B cell (primary cell): ENCODE measurements at regions of chr19 and their contacts with region 1.

Region 1: GRCh38 chr19:8269724-8270123 is 38.4 kb downstream of the CD320 start:
- DNase-seq: peak; percentile 22
- ATAC-seq: no peak
- H3K4me3 ChIP-seq: peak overlapping the region in 4 of 5 experiments; percentile 51 to 64 (median 56)
- H3K4me3 Mint-ChIP-seq: peak overlapping the region; percentile 86
- H3K27ac ChIP-seq: peak overlapping the region; percentile 88
- H3K27ac Mint-ChIP-seq: peak overlapping the region; percentile 96
- H3K4me1 ChIP-seq: peaks cover 14 to 22% of the 10 kb centered on the region in 2 donors
- H3K4me1 Mint-ChIP-seq: peaks cover 21% of the 10 kb centered on the region
- H3K27me3 ChIP-seq: no peaks in the 10 kb centered on the region
- H3K27me3 Mint-ChIP-seq: no peaks in the 10 kb centered on the region
- CTCF ChIP-seq: no peak

Region 2: GRCh38 chr19:8396563-8397203 is 127.0 kb after region 1 on chr19:
- CTCF ChIA-PET with region 1: no interaction called
- POLR2A ChIA-PET with region 1: no interaction called
- intact Hi-C with region 1: loop called (anchors 5 kb)
- DNase-seq: peak; percentile 53
- ATAC-seq: peak; percentile 83
- H3K4me3 ChIP-seq: no peak overlapping the region
- H3K4me3 Mint-ChIP-seq: no peak overlapping the region
- H3K27ac ChIP-seq: no peak overlapping the region
- H3K27ac Mint-ChIP-seq: peak overlapping the region; percentile 35
- H3K4me1 ChIP-seq: peaks cover 1 to 5% of the 10 kb centered on the region in 2 donors
- H3K4me1 Mint-ChIP-seq: peaks cover 26% of the 10 kb centered on the region
- H3K27me3 ChIP-seq: no peaks in the 10 kb centered on the region
- H3K27me3 Mint-ChIP-seq: no peaks in the 10 kb centered on the region
- CTCF ChIP-seq: peak; percentile 54